Posterior vena cava (tissue), 2 donors: ENCODE measurements at regions of chr6 and their contacts with region 1.

Region 1: GRCh38 chr6:34602318-34603111 is 46.4 kb upstream of the SPDEF start:
- DNase-seq: no peak

Region 2: GRCh38 chr6:34161857-34162515 is 440.5 kb before region 1 on chr6:
- intact Hi-C with region 1: loop called in 1 of 2 experiments (anchors 10 kb)
- DNase-seq: peak; percentile 40

Region 3: GRCh38 chr6:34196126-34196830 is 406.2 kb before region 1 on chr6:
- intact Hi-C with region 1: loop called in 1 of 2 experiments (anchors 10 kb)
- DNase-seq: peak; percentile 97